ENCODE measurements at regions of chr3 and their contacts with region 1.

Region 1: GRCh38 chr3:185983495-185984141 is 45.8 kb upstream of the TRA2B start:
- DNase-seq: peak; percentile 45
- H3K4me3 ChIP-seq: no peak overlapping the region
- H3K27ac ChIP-seq: no peak overlapping the region
- H3K27me3 ChIP-seq: no peaks in the 10 kb centered on the region
- CTCF ChIP-seq: peak; percentile 92

Region 2: GRCh38 chr3:186268616-186269448 is 285.2 kb after region 1 on chr3:
- CTCF ChIA-PET with region 1: interaction called, 28 read pairs
- POLR2A ChIA-PET with region 1: no interaction called
- DNase-seq: no peak
- H3K4me3 ChIP-seq: no peak overlapping the region
- H3K27ac ChIP-seq: no peak overlapping the region
- H3K27me3 ChIP-seq: peaks cover 22% of the 10 kb centered on the region
- CTCF ChIP-seq: peak; percentile 52

Region 3: DNA sequence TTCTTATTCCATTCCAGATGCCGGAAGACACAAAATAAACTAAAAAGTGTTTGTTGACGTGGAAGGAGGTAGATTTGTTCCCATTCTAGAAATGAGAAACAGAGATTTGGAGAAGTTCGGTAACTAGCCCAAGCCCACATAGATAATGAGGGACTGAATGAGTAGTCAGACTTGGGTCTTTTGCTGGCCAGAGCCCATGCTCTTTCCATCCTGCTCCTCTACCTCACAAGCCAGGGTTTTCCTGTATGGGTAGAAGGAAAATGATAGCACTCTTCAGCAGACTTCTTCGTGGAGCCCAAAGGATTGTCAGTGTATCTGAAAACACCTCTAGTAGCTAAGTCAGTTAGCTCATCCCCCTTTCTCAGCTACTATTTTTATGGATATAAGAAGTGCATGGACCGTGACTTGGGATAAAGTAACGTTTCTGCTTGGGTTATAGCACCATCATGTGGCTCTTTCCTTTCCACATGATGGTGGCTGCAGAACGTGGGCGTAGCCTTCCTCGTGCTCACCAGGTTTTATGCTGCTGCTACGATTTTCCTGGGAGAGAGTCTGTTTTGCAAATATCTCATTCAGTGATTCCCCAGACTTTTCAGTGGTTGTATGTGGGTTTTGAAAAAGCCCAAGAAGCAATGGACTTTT is 293.8 kb after region 1 on chr3:
- CTCF ChIA-PET with region 1: interaction called, 51 read pairs
- POLR2A ChIA-PET with region 1: no interaction called
- DNase-seq: peak; percentile 37
- H3K4me3 ChIP-seq: no peak overlapping the region
- H3K27ac ChIP-seq: no peak overlapping the region
- H3K27me3 ChIP-seq: peaks cover 2% of the 10 kb centered on the region
- CTCF ChIP-seq: peak; percentile 64

Region 4: GRCh38 chr3:186534113-186534669 is 550.6 kb after region 1 on chr3:
- CTCF ChIA-PET with region 1: interaction called, 61 read pairs
- POLR2A ChIA-PET with region 1: no interaction called
- DNase-seq: no peak
- H3K4me3 ChIP-seq: no peak overlapping the region
- H3K27ac ChIP-seq: no peak overlapping the region
- H3K27me3 ChIP-seq: no peaks in the 10 kb centered on the region
- CTCF ChIP-seq: no peak